ENCODE measurements at regions of chr5 and their contacts with region 1.

Region 1: GRCh38 chr5:141878711-141879425 is 658 bp upstream of the PCDH1 start:
- DNase-seq: peak; percentile 94
- H3K4me3 ChIP-seq: peak overlapping the region; percentile 38 to 71 (median 66)
- H3K27ac ChIP-seq: peak overlapping the region; percentile 62 to 79 (median 72)
- H3K4me1 ChIP-seq: peaks cover 0 to 43% (median 38%) of the 10 kb centered on the region in 4 donors
- H3K27me3 ChIP-seq: peaks cover 38 to 85% (median 57%) of the 10 kb centered on the region in 3 donors
- CTCF ChIP-seq: peak; percentile 93 to 97 (median 93)
- EP300 ChIP-seq: no peak
- POLR2A ChIP-seq: no peak

Region 2: GRCh38 chr5:141691867-141692532 is 186.9 kb before region 1 on chr5:
- intact Hi-C with region 1: loop called (anchors 2 kb)
- DNase-seq: peak; percentile 88
- H3K4me3 ChIP-seq: peak overlapping the region in 3 of 4 donors; percentile 20 to 38 (median 20)
- H3K27ac ChIP-seq: no peak overlapping the region
- H3K4me1 ChIP-seq: peaks cover 0 to 8% (median 8%) of the 10 kb centered on the region in 4 donors
- H3K27me3 ChIP-seq: peaks cover 0 to 14% (median 10%) of the 10 kb centered on the region in 3 donors
- CTCF ChIP-seq: peak; percentile 88 to 99 (median 94)
- EP300 ChIP-seq: no peak
- POLR2A ChIP-seq: no peak

Region 3: GRCh38 chr5:141701360-141702119 is 177.3 kb before region 1 on chr5:
- intact Hi-C with region 1: loop called (anchors 1 kb)
- DNase-seq: no peak
- H3K4me3 ChIP-seq: peak overlapping the region in 1 of 4 donors; percentile 49
- H3K27ac ChIP-seq: no peak overlapping the region
- H3K4me1 ChIP-seq: peaks cover 0 to 20% (median 19%) of the 10 kb centered on the region in 4 donors
- H3K27me3 ChIP-seq: peaks cover 22 to 85% (median 56%) of the 10 kb centered on the region in 3 donors
- CTCF ChIP-seq: no peak
- EP300 ChIP-seq: no peak
- POLR2A ChIP-seq: no peak

Region 4: DNA sequence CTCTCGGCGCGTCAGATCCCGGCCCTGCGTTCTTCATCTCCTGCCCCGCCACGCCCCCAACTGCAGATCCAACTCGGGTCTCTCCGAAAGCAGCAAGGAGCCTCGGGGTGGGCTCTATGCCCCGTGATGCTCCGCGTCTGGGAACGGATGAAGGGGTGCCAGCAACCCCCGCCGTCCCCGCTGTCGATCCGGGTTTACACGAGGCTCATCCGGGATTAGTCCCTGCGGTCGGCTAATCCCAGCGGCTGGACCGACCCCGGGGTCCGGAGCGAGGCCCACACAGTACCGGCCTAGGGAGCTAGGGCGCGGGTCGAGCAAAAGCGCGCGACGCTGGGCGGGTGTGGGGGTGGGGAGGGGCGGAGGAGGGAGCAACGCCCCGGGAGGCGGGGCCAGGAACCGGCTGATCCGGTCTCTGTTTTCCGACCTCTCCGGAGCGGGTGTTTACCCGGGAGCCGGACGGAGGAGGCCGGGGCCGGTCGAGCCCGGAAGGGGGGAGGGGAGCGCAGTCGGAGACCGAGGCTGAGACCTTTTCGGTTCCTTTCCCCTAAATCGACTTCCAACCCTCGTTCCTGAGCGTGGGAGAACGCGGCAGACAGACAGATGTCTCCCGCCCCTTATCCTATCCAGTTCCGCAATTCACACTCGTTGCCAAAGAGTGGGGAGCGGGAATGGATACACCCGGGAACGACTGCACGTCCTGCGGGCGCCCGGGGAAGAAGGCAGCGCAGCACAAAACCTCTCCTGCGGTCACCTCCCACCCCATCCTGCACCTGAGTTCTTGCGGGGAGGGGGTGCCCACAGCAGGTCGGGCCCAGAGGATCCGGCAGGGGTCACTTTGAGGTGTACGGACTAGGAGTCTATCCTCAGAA is 29.3 kb before region 1 on chr5:
- intact Hi-C with region 1: loop called (anchors 1 kb)
- DNase-seq: peak; percentile 92
- H3K4me3 ChIP-seq: peak overlapping the region; percentile 59 to 78 (median 66)
- H3K27ac ChIP-seq: peak overlapping the region; percentile 85 to 93 (median 90)
- H3K4me1 ChIP-seq: peaks cover 0 to 16% (median 11%) of the 10 kb centered on the region in 4 donors
- H3K27me3 ChIP-seq: peaks cover 0 to 7% (median 0%) of the 10 kb centered on the region in 3 donors
- CTCF ChIP-seq: peak in 3 of 4 experiments; percentile 14 to 38 (median 26)
- EP300 ChIP-seq: peak in 1 of 4 donors; percentile 3
- POLR2A ChIP-seq: peak; percentile 69 to 80

Region 5: GRCh38 chr5:141923448-141924352 is 44.8 kb after region 1 on chr5 and contains the start of gene DELE1:
- intact Hi-C with region 1: loop called (anchors 5 kb)
- DNase-seq: peak; percentile 97
- H3K4me3 ChIP-seq: peak within 1 kb of the TSS; percentile 61 to 70 (median 66)
- H3K27ac ChIP-seq: peak within 1 kb of the TSS; percentile 92 to 96 (median 92)
- H3K4me1 ChIP-seq: peaks cover 0 to 21% (median 15%) of the 10 kb centered on the region in 4 donors
- H3K27me3 ChIP-seq: no peaks in the 10 kb centered on the region
- CTCF ChIP-seq: no peak
- EP300 ChIP-seq: no peak
- POLR2A ChIP-seq: peak; percentile 77 to 90
- total RNA-seq, gene DELE1: 47.7 to 88.3 (median 69.1) TPM

Region 6: GRCh38 chr5:141960449-141961202 is 81.8 kb after region 1 on chr5:
- intact Hi-C with region 1: loop called (anchors 5 kb)
- DNase-seq: peak; percentile 93
- H3K4me3 ChIP-seq: no peak overlapping the region
- H3K27ac ChIP-seq: peak overlapping the region in 1 of 4 donors; percentile 22
- H3K4me1 ChIP-seq: peaks cover 0 to 15% (median 0%) of the 10 kb centered on the region in 4 donors
- H3K27me3 ChIP-seq: no peaks in the 10 kb centered on the region
- CTCF ChIP-seq: peak; percentile 67 to 81 (median 74)
- EP300 ChIP-seq: no peak
- POLR2A ChIP-seq: no peak

Region 7: GRCh38 chr5:142206801-142207200 is 327.9 kb after region 1 on chr5:
- intact Hi-C with region 1: no loop called
- DNase-seq: no peak
- H3K4me3 ChIP-seq: no peak overlapping the region
- H3K27ac ChIP-seq: no peak overlapping the region
- H3K4me1 ChIP-seq: no peaks in the 10 kb centered on the region
- H3K27me3 ChIP-seq: no peaks in the 10 kb centered on the region
- CTCF ChIP-seq: no peak
- EP300 ChIP-seq: no peak
- POLR2A ChIP-seq: no peak